WTC11 (cell line): ENCODE measurements at regions of chr3 and their contacts with region 1.

Region 1: GRCh38 chr3:123365450-123366143 is 83.3 kb downstream of the ADCY5 start:
- DNase-seq: peak; percentile 67
- ATAC-seq: peak; percentile 98
- H3K4me3 Mint-ChIP-seq: no peak overlapping the region
- H3K27ac Mint-ChIP-seq: no peak overlapping the region
- H3K4me1 Mint-ChIP-seq: peaks cover 4% of the 10 kb centered on the region
- H3K27me3 Mint-ChIP-seq: peaks cover 9% of the 10 kb centered on the region
- CTCF ChIP-seq: peak; percentile 39; the same call in 1 of the 2 replicates

Region 2: DNA sequence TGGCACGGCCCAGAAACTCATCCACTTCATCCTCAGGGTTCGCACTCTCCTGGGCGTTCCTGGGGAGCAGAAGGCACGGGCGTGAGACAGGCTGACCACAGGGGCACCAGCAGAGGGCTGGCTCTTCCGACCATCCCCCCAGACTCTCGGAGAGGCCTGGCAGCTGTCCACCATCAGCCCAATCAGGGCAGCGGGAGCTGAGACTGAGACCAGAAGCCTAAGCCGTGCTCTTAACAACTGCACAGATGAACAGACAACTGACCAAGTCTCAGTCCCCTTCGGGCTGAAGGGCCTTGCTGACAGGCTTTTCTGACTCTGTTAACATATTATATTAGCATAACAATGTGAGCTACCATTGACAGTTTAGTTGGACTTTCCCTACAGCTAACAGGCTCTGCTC is 45.8 kb before region 1 on chr3:
- CTCF ChIA-PET with region 1: interaction called, 11 read pairs
- POLR2A ChIA-PET with region 1: interaction called, 4 read pairs
- DNase-seq: peak; percentile 28
- ATAC-seq: peak; percentile 36
- H3K4me3 Mint-ChIP-seq: peak overlapping the region; percentile 45
- H3K27ac Mint-ChIP-seq: peak overlapping the region; percentile 88
- H3K4me1 Mint-ChIP-seq: peaks cover 80% of the 10 kb centered on the region
- H3K27me3 Mint-ChIP-seq: no peaks in the 10 kb centered on the region
- CTCF ChIP-seq: no peak

Region 3: DNA sequence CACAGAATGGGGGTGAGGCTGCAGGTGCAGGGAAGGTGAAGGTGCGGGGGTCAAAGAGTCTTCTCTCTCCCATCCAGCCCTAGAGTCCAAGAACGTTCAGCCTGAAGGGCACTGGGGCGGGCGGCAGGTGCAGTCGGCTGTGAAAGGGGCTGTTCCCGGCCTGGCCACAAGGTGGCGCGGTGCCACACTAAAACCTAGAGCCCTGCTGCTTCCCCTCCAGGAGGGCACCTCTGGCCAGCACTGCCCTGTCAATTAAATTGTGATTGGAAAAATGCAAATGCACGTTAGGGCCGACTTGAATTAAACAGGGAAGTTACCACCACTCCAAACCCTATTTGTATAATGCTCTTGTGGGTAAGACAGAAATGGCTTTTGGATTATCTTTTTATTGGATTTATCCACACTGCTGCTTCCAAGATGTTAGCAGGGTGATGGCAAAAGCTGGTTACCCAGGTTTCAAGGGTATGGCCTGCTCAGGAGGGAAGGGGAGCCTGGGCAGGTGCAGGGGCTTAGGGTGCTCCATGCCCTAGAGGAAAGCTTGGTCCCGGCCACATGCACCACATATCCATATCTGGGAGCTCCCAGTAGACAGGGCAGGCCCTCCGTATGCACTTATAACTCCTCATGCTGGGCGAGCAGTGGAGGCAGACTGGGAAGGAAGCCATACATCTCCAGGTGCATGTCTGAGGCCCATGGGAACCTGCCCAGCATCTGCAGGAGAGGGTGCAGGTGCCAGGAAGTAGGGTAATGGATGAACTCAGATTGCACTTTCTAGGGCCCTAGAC is 36.6 kb before region 1 on chr3:
- CTCF ChIA-PET with region 1: interaction called, 23 read pairs
- POLR2A ChIA-PET with region 1: no interaction called
- DNase-seq: peak; percentile 90
- ATAC-seq: peak; percentile 86
- H3K4me3 Mint-ChIP-seq: no peak overlapping the region
- H3K27ac Mint-ChIP-seq: no peak overlapping the region
- H3K4me1 Mint-ChIP-seq: peaks cover 20% of the 10 kb centered on the region
- H3K27me3 Mint-ChIP-seq: no peaks in the 10 kb centered on the region
- CTCF ChIP-seq: peak; percentile 94

Region 4: DNA sequence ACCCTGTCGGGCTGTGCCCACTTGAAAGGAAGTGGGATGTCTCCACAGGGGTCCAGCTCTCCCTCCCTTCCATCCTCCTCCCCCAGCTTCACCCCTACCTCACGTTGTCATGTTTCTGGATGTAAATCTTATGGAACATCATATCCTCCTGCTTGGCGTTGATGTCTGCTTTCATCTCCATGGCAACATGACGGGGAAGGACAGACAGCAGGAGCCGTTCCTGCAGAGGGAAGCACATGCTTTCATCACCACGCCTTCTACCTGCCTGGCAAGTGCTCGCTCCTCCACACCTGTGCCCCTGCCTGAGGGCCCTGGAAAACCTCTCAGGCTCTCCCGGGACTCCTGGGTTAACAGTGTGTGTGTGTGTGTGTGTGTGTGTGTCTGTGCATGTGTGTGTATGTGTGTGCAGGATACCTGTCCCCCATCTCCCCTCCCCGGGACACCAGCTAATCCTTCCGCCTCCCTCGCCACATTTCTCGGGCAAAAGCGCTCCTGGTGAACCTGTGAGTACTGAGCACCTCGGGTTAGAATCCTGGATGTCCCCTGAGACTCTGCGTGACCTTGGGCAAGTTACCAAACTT is 17.8 kb before region 1 on chr3:
- CTCF ChIA-PET with region 1: interaction called, 12 read pairs
- POLR2A ChIA-PET with region 1: no interaction called
- DNase-seq: no peak
- ATAC-seq: no peak
- H3K4me3 Mint-ChIP-seq: no peak overlapping the region
- H3K27ac Mint-ChIP-seq: no peak overlapping the region
- H3K4me1 Mint-ChIP-seq: peaks cover 26% of the 10 kb centered on the region
- H3K27me3 Mint-ChIP-seq: no peaks in the 10 kb centered on the region
- CTCF ChIP-seq: no peak

Region 5: DNA sequence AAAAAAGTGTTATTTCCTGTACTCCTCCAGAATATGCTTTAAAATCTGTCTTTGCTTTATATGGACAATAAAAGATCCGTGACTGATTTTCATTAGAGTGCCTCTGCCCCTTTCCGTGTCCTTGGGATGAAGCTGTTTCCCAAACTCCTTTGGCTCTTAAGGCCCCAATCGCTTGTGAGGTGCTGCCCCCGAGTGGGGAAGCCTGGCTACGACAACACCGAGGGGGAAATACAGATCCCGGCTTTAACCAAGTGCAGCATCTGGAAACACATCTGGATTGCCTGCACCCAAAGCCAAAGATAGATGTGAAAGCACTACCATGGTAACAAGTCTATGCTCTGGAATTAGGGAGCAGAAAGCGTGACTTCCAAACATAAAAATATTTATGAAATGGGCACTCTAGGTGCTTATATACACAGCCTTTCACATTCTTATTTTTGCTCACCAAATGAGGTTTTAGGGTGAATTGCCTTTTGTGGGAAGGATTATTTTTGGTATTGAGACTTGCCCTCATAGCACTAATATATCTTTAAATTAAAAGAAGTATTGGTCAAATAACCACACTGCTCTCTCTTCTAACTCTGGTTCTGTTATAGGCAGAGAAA is 123.9 kb after region 1 on chr3:
- CTCF ChIA-PET with region 1: interaction called, 15 read pairs
- POLR2A ChIA-PET with region 1: interaction called, 4 read pairs
- DNase-seq: peak; percentile 86
- ATAC-seq: peak; percentile 95
- H3K4me3 Mint-ChIP-seq: no peak overlapping the region
- H3K27ac Mint-ChIP-seq: no peak overlapping the region
- H3K4me1 Mint-ChIP-seq: no peaks in the 10 kb centered on the region
- H3K27me3 Mint-ChIP-seq: no peaks in the 10 kb centered on the region; the same call in 1 of the 2 replicates
- CTCF ChIP-seq: peak; percentile 74